ENCODE measurements at regions of chr4 and their contacts with region 1.

Region 1: GRCh38 chr4:122922877-122923511 is 597 bp upstream of the NUDT6 start:
- DNase-seq: peak; percentile 79 to 95 (median 84)
- ATAC-seq: peak; percentile 91
- H3K4me3 ChIP-seq: peak overlapping the region; percentile 85
- H3K27ac ChIP-seq: peak overlapping the region; percentile 85
- H3K4me1 ChIP-seq: peaks cover 6 to 26% of the 10 kb centered on the region in 2 experiments; a peak in 4 of 5 replicates
- H3K27me3 ChIP-seq: no peaks in the 10 kb centered on the region
- CTCF ChIP-seq: no peak
- EP300 ChIP-seq: peak; percentile 52; the same call in 1 of the 2 replicates
- POLR2A ChIP-seq: peak; percentile 79
- RAD21 ChIP-seq: no peak

Region 2: GRCh38 chr4:121869841-121870656 is 1052.9 kb before region 1 on chr4 and contains the start of gene BBS7:
- CTCF ChIA-PET with region 1: no interaction called
- POLR2A ChIA-PET with region 1: no interaction called
- in situ Hi-C with region 1: loop called (anchors 25 kb)
- intact Hi-C with region 1: no loop called
- DNase-seq: peak; percentile 94 to 98 (median 95)
- ATAC-seq: peak; percentile 98
- H3K4me3 ChIP-seq: peak within 1 kb of the TSS; percentile 84
- H3K27ac ChIP-seq: peak within 1 kb of the TSS; percentile 63; the same call in 2 of the 3 replicates
- H3K4me1 ChIP-seq: peaks cover 7 to 11% of the 10 kb centered on the region in 2 experiments; a peak in 4 of 5 replicates
- H3K27me3 ChIP-seq: no peaks in the 10 kb centered on the region
- CTCF ChIP-seq: no peak
- EP300 ChIP-seq: no peak
- POLR2A ChIP-seq: peak; percentile 81
- RAD21 ChIP-seq: no peak
- polyA plus RNA-seq, gene BBS7: 17.2 to 19.0 TPM

Region 3: DNA sequence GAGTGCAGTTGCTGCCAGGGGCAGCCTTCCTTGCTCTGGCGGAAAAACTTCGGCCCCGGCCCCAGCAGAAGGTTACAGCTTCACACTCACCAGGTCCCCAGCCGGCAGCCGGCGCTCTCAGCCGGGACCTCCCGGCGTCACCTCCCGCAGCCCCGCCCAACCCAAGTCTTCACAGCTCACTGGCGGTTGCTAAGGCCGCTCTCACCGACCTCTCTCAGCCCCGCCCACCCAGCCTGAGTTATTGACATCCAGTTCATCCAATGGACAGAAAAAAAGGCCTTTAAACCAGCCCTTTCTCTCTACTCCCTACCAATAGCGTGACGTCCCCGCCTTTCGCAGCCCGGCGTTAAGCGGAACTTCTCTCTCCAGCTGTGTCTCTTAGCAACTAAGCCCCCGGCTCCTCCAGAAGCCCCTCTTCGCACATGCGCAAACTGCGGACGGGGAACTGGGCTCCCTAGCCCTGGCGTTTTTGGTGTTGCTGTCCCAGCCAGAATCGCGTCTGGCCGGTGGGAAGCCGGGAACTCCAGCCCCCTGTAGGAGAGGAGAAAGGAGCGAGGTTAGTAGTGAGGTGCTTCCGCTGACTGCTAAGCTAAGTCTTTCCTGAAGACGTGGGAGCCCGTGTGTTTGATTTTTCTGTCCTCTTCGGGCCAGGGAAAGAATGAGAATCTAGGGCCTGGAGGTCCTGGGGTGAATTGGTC is 190.5 kb before region 1 on chr4 and contains the start of gene BBS12:
- CTCF ChIA-PET with region 1: no interaction called
- POLR2A ChIA-PET with region 1: interaction called, 10 read pairs
- in situ Hi-C with region 1: no loop called
- intact Hi-C with region 1: no loop called
- DNase-seq: peak; percentile 95 to 100 (median 97)
- ATAC-seq: peak; percentile 98
- H3K4me3 ChIP-seq: peak within 1 kb of the TSS; percentile 66
- H3K27ac ChIP-seq: peak within 1 kb of the TSS; percentile 73
- H3K4me1 ChIP-seq: peaks cover 4% of the 10 kb centered on the region in 2 experiments; a peak in 3 of 5 replicates
- H3K27me3 ChIP-seq: no peaks in the 10 kb centered on the region
- CTCF ChIP-seq: peak; percentile 61 to 76 (median 65)
- EP300 ChIP-seq: peak; percentile 29; the same call in 1 of the 2 replicates
- POLR2A ChIP-seq: peak; percentile 55; the same call in 1 of the 2 replicates
- RAD21 ChIP-seq: peak; percentile 59 to 64
- polyA plus RNA-seq, gene BBS12: 5.1 to 6.5 TPM

Region 4: DNA sequence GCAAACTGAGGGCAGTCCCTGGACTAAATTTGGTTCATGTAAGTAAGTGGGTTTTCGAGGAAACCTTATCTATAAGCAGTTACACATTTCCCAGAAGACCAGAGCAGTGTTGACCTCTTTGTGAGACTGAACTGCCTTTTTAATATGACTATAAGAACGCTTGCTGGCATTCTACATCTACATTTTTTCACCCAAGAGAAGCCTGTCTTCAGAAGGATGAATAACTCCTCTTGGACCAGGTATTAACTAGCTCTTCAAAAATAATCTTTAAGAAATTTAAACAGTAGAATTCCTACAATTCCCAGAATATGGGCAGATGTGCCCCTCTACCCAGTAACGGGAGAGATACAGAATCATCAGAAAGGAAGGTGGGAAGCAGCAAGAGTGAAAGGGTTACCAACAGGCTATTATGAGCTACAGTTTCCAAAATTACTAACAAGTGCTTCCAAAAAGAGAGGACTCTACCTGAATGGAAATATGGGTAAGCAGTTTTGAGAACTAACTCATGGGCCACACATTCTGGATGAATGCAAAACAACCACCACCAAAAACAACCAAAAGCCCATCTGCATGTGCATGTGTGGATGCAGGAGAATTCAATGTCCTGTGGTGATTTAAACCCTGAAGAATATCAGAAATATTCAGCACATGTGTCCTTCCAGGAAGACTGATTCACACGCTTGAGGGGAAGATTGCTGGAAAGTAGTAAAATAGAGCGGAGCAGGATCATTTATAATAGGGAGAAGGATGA is 173.1 kb before region 1 on chr4:
- CTCF ChIA-PET with region 1: no interaction called
- POLR2A ChIA-PET with region 1: no interaction called
- in situ Hi-C with region 1: loop called (anchors 5 kb)
- intact Hi-C with region 1: no loop called
- DNase-seq: peak in 2 of 4 experiments; percentile 59 to 87
- ATAC-seq: peak; percentile 86
- H3K4me3 ChIP-seq: peak overlapping the region; percentile 28
- H3K27ac ChIP-seq: peak overlapping the region; percentile 91
- H3K4me1 ChIP-seq: peaks cover 0 to 46% of the 10 kb centered on the region in 2 experiments; a peak in 3 of 5 replicates
- H3K27me3 ChIP-seq: no peaks in the 10 kb centered on the region
- CTCF ChIP-seq: no peak
- EP300 ChIP-seq: peak; percentile 96
- POLR2A ChIP-seq: peak; percentile 57; the same call in 1 of the 2 replicates
- RAD21 ChIP-seq: 0 out of 4 replicates have a peak, but pooled peaks of 1 of the 2 experiments have one; percentile 11

Region 5: DNA sequence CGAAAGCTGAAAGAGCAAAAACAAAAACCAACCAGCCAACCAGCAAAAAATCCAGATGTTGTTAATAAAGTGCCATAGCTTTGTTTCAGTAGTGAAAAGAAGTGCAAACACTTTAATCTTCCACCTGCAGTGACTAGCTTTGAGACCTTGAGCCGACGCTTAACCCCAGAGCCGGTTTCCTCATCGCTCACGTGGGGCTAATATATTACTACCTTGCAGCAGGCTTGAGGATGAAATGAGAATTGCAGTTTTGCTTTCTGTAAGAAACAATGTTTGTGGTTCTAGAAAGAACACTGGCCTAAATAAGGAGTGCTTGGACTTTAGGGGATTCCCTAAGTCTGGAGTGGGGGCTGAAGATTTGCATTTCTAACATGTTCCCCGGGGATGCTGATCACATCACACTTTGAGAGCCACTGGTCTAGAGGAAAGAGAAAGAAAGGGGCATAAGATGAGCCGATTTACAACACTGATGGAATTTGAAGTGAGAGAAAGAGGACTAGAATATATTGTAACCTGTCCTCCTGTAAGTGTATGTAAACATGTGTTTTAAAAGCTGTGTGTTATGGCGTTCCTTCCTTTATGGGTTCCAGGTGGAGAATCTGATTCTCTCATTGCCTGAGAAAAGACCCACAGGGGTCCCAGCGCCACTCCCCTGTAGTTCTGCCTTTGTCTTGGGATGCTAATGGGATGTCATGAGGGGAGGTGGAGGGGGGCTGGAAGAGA is 95.0 kb before region 1 on chr4:
- CTCF ChIA-PET with region 1: interaction called, 3 read pairs
- POLR2A ChIA-PET with region 1: no interaction called
- in situ Hi-C with region 1: no loop called
- intact Hi-C with region 1: loop called (anchors 2 kb)
- DNase-seq: peak; percentile 47 to 67 (median 56)
- ATAC-seq: peak; percentile 74
- H3K4me3 ChIP-seq: peak overlapping the region; percentile 70
- H3K27ac ChIP-seq: peak overlapping the region; percentile 73
- H3K4me1 ChIP-seq: peaks cover 8 to 16% of the 10 kb centered on the region in 2 experiments; a peak in 4 of 5 replicates
- H3K27me3 ChIP-seq: no peaks in the 10 kb centered on the region
- CTCF ChIP-seq: no peak; a peak in 1 of 6 replicates
- EP300 ChIP-seq: no peak
- POLR2A ChIP-seq: no peak; the same call in 1 of the 2 replicates
- RAD21 ChIP-seq: no peak

Region 6: DNA sequence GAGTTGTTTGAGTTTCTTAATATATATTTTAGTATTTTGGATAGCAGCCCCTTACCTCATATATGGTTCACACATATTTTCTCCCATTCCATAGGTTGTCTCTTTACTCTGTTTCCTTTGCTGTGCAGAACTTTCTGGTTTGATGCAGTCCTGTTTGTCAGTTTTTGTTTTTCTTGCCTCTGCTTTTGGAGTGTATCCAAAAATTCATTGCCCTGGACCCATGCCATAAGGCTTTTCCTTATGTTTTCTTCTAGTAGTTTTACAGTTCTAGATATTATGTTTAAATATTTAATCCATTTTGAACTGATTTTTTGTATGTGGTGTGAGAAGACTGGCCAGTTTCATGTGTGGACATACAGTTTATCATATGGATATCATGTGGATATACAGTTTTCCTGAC is 57.9 kb after region 1 on chr4:
- CTCF ChIA-PET with region 1: no interaction called
- POLR2A ChIA-PET with region 1: no interaction called
- in situ Hi-C with region 1: no loop called
- intact Hi-C with region 1: no loop called
- DNase-seq: no peak
- ATAC-seq: no peak
- H3K4me3 ChIP-seq: no peak overlapping the region
- H3K27ac ChIP-seq: no peak overlapping the region
- H3K4me1 ChIP-seq: no peaks in the 10 kb centered on the region
- H3K27me3 ChIP-seq: no peaks in the 10 kb centered on the region
- CTCF ChIP-seq: no peak
- EP300 ChIP-seq: no peak
- POLR2A ChIP-seq: no peak
- RAD21 ChIP-seq: no peak

Region 7: DNA sequence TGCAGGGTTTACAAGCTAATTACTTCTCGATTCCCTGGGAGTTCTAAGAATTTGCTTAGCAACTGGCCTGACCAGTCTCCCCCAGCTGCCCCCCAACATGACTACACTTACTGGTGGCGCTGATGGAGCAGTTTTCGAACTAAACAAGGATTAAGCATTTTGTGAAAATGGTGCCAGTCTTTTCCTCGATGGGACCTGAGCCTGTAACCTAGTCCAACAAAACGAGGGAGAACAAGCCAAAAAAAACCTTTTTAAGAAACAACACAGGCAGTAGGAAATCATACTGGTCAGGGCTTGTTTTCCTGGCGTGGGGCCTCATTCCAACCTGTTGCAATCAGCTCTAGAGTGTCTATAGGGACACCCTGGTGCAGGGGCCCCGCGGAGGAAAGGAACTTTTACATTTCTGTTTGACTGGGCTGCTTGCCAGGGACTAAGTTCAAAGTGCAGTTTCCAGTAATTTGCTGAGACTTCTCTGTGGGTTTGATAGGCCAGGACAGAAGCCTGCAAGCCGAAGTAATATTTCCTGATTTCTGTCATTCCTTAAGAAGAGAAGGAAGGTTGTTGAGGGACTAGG is 632.3 kb after region 1 on chr4:
- CTCF ChIA-PET with region 1: no interaction called
- POLR2A ChIA-PET with region 1: no interaction called
- in situ Hi-C with region 1: no loop called
- intact Hi-C with region 1: no loop called
- DNase-seq: peak in 2 of 4 experiments; percentile 19 to 41
- ATAC-seq: peak; percentile 76
- H3K4me3 ChIP-seq: no peak overlapping the region
- H3K27ac ChIP-seq: no peak overlapping the region
- H3K4me1 ChIP-seq: peaks cover 0 to 10% of the 10 kb centered on the region in 2 experiments; a peak in 2 of 5 replicates
- H3K27me3 ChIP-seq: peaks cover 0 to 4% of the 10 kb centered on the region in 2 experiments; a peak in 1 of 5 replicates
- CTCF ChIP-seq: no peak
- EP300 ChIP-seq: no peak
- POLR2A ChIP-seq: no peak
- RAD21 ChIP-seq: no peak

Measured in K562 (cell line).